AG04449 (cell line): ENCODE measurements at regions of chr2 and their contacts with region 1.

Region 1: GRCh38 chr2:23617167-23617810 is 232.3 kb downstream of the KLHL29 start:
- DNase-seq: peak; percentile 45
- H3K4me3 ChIP-seq: peak overlapping the region; percentile 26; the same call in 1 of the 2 replicates
- CTCF ChIP-seq: peak; percentile 90

Region 2: GRCh38 chr2:23600346-23600745 is 16.9 kb before region 1 on chr2:
- CTCF ChIA-PET with region 1: interaction called, 17 read pairs
- POLR2A ChIA-PET with region 1: no interaction called
- DNase-seq: no peak
- H3K4me3 ChIP-seq: no peak overlapping the region
- CTCF ChIP-seq: no peak

Region 3: DNA sequence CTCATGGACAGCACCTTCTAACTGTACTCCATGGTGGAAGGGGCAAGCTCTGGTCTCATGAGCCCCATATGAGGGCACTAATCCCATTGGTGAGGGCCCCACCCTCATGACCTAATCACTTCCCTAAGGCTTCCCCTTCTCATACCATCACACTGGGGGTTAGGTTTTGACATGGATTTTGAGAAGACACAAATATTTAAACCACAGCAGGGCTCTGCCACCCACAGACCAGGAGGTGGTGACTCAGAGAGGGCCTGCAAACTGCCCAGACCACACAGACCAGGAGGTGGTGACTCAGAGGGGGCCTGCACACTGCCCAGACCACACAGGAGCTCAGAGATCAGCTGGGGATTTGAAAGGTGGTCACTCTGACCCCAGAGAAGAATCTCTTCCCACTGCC is 10.3 kb before region 1 on chr2:
- CTCF ChIA-PET with region 1: interaction called, 17 read pairs
- POLR2A ChIA-PET with region 1: no interaction called
- DNase-seq: peak; percentile 50
- H3K4me3 ChIP-seq: no peak overlapping the region
- CTCF ChIP-seq: no peak